CD4-positive, alpha-beta memory T cell (primary cell): ENCODE measurements at regions of chr10 and their contacts with region 1.

Region 1: DNA sequence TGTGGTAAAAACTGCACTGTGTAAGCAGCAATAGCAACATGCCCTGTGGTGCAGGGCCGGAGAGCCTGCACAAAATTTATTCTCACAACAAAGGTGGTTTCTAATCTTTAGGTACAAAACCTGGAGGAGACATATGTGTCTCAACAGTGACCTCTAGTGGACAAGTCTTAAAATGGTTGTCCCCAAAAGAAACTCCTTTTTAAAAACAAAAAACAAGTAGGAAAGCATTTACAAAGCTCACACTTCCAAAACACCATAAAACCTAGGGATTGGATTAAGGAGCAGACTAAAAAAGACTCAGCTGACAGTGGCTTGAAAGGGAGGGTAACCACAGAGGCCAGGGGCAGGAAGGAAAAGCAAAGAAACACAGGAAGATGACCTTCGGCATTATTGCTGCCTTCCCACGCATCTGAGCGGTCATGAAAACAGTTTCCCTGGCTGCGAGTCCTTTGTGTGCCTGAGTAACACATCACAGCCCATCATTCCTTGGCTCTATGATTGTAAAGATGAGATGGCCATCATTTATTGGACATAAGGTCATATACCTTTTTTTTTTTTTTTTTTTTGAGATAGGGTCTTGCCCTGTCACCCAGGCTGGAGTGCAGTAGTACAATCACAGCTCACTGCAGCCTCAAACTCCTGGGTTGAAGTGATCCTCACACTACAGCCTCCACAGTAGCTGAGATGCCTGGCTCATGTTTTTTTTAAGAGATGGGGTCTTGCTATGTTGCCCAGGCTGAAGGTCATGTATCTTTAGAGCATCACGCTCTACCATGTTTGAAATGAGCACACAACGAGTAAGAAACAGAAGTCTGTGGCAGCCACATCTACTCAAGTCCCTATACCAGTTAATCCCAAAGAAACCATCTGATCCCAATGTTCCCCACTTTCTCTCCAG is 39.5 kb downstream of the RSU1 start:
- DNase-seq: peak in 4 of 5 donors; percentile 57 to 66 (median 62)
- H3K4me3 ChIP-seq: no peak overlapping the region
- H3K4me3 Mint-ChIP-seq: peak overlapping the region in 6 of 8 donors; percentile 14 to 82 (median 66)
- H3K27ac ChIP-seq: no peak overlapping the region
- H3K27ac Mint-ChIP-seq: peak overlapping the region; percentile 77 to 98 (median 89)
- H3K4me1 ChIP-seq: peaks cover 28% of the 10 kb centered on the region
- H3K4me1 Mint-ChIP-seq: peaks cover 23 to 41% (median 32%) of the 10 kb centered on the region in 4 donors
- H3K27me3 ChIP-seq: no peaks in the 10 kb centered on the region
- H3K27me3 Mint-ChIP-seq: no peaks in the 10 kb centered on the region

Region 2: DNA sequence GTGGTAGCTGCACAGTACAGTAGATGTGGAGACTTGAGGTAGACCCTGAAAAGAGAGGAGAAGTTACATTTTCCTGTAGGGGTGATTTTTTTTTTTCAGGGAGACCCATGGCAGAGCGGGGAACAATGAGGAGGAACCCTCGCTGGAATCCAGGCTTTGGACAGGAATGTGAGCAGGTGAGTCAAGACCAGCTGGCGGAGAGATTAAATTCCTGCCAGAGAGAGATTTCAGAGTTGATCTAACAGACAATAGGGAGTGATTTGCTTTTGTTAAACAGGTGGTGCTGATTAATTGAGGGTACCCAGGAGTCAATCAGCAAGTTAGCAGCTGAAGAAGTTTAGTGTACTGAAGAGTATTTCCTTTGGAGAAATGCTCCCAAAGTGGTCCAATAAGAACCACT is 875.8 kb before region 1 on chr10:
- CTCF ChIA-PET with region 1: interaction called, 21 read pairs
- POLR2A ChIA-PET with region 1: no interaction called
- intact Hi-C with region 1: loop called (anchors 1 kb)
- DNase-seq: no peak
- H3K4me3 ChIP-seq: no peak overlapping the region
- H3K4me3 Mint-ChIP-seq: no peak overlapping the region
- H3K27ac ChIP-seq: no peak overlapping the region
- H3K27ac Mint-ChIP-seq: no peak overlapping the region
- H3K4me1 ChIP-seq: no peaks in the 10 kb centered on the region
- H3K4me1 Mint-ChIP-seq: peaks cover 0 to 1% (median 0%) of the 10 kb centered on the region in 4 donors
- H3K27me3 ChIP-seq: peaks cover 7% of the 10 kb centered on the region
- H3K27me3 Mint-ChIP-seq: peaks cover 19 to 29% of the 10 kb centered on the region in 2 donors

Region 3: DNA sequence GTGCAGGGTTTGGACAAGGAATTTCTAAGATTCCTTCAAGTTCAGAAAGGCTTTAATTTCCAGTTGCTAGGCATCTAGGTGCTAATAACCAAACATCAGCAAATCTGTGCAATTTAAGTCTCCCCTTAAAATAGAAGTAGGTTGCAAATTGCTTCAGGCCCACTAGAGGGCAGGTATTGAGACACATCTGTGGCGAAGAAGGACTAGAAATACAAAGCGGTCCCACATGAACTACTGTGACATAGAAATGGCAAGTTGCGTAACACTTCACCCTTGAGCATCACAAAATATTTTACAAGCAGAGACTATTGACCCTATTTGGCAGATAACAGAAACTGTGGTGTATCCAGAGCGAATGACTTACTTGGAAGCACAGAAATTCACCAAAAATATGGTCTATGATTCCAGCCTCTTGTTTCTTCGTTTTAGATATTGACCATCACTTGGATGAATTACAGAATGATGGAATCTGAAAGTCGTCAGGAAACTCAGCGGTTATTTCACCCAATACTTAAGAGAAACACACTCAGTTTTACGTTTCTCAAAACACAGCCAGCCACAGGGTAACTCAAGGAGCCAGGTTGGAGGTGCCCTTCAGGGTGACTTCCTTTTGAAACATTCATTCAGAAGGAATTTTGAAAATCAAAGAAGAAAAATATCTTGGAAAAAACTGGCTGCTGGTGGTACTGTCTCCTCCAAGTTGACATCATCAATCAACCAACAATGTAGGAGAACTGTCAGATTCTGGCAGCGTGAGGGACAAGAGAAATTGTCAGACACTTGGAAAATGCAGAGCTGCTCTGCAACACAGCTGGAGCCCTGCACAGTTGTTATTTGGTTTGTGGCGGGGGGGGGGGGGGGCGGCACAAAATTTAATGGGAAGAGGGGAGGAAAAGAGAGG is 661.1 kb before region 1 on chr10:
- CTCF ChIA-PET with region 1: no interaction called
- POLR2A ChIA-PET with region 1: no interaction called
- intact Hi-C with region 1: loop called (anchors 5 kb)
- DNase-seq: no peak
- H3K4me3 ChIP-seq: no peak overlapping the region
- H3K4me3 Mint-ChIP-seq: no peak overlapping the region
- H3K27ac ChIP-seq: no peak overlapping the region
- H3K27ac Mint-ChIP-seq: no peak overlapping the region
- H3K4me1 ChIP-seq: no peaks in the 10 kb centered on the region
- H3K4me1 Mint-ChIP-seq: no peaks in the 10 kb centered on the region
- H3K27me3 ChIP-seq: no peaks in the 10 kb centered on the region
- H3K27me3 Mint-ChIP-seq: peaks cover 1 to 2% of the 10 kb centered on the region in 2 donors

Region 4: GRCh38 chr10:16803464-16803863 is 25.7 kb after region 1 on chr10:
- CTCF ChIA-PET with region 1: interaction called, 19 read pairs
- POLR2A ChIA-PET with region 1: no interaction called
- intact Hi-C with region 1: no loop called
- DNase-seq: no peak
- H3K4me3 ChIP-seq: no peak overlapping the region
- H3K4me3 Mint-ChIP-seq: no peak overlapping the region
- H3K27ac ChIP-seq: no peak overlapping the region
- H3K27ac Mint-ChIP-seq: no peak overlapping the region
- H3K4me1 ChIP-seq: peaks cover 14% of the 10 kb centered on the region
- H3K4me1 Mint-ChIP-seq: peaks cover 27 to 49% (median 37%) of the 10 kb centered on the region in 4 donors
- H3K27me3 ChIP-seq: no peaks in the 10 kb centered on the region
- H3K27me3 Mint-ChIP-seq: no peaks in the 10 kb centered on the region

Region 5: GRCh38 chr10:16809074-16809718 is 31.5 kb after region 1 on chr10:
- CTCF ChIA-PET with region 1: interaction called, 19 read pairs
- POLR2A ChIA-PET with region 1: no interaction called
- intact Hi-C with region 1: loop called (anchors 1 kb)
- DNase-seq: peak in 4 of 5 donors; percentile 37 to 49 (median 42)
- H3K4me3 ChIP-seq: no peak overlapping the region
- H3K4me3 Mint-ChIP-seq: no peak overlapping the region
- H3K27ac ChIP-seq: no peak overlapping the region
- H3K27ac Mint-ChIP-seq: peak overlapping the region in 3 of 7 donors; percentile 20 to 44 (median 21)
- H3K4me1 ChIP-seq: peaks cover 7% of the 10 kb centered on the region
- H3K4me1 Mint-ChIP-seq: peaks cover 19 to 35% (median 26%) of the 10 kb centered on the region in 4 donors
- H3K27me3 ChIP-seq: no peaks in the 10 kb centered on the region
- H3K27me3 Mint-ChIP-seq: no peaks in the 10 kb centered on the region